ENCODE measurements at regions of chr12 and their contacts with region 1.

Region 1: GRCh38 chr12:44847888-44848702 is 28.0 kb downstream of the NELL2 start:
- DNase-seq: peak; percentile 86
- ATAC-seq: peak; percentile 90
- H3K4me3 Mint-ChIP-seq: peak overlapping the region; percentile 61
- H3K27ac Mint-ChIP-seq: peak overlapping the region; percentile 96
- H3K4me1 Mint-ChIP-seq: peaks cover 88% of the 10 kb centered on the region
- H3K27me3 Mint-ChIP-seq: no peaks in the 10 kb centered on the region

Region 2: GRCh38 chr12:44827832-44828438 is 20.2 kb before region 1 on chr12:
- CTCF ChIA-PET with region 1: interaction called, 5 read pairs
- POLR2A ChIA-PET with region 1: interaction called, 18 read pairs
- DNase-seq: no peak
- ATAC-seq: peak; percentile 61
- H3K4me3 Mint-ChIP-seq: peak overlapping the region; percentile 64
- H3K27ac Mint-ChIP-seq: peak overlapping the region; percentile 87
- H3K4me1 Mint-ChIP-seq: peaks cover 67% of the 10 kb centered on the region
- H3K27me3 Mint-ChIP-seq: no peaks in the 10 kb centered on the region

Region 3: GRCh38 chr12:44835641-44836379 is 12.3 kb before region 1 on chr12:
- CTCF ChIA-PET with region 1: interaction called, 12 read pairs
- POLR2A ChIA-PET with region 1: interaction called, 17 read pairs
- DNase-seq: peak; percentile 48
- ATAC-seq: peak; percentile 66
- H3K4me3 Mint-ChIP-seq: peak overlapping the region; percentile 40
- H3K27ac Mint-ChIP-seq: peak overlapping the region; percentile 86
- H3K4me1 Mint-ChIP-seq: peaks cover 90% of the 10 kb centered on the region
- H3K27me3 Mint-ChIP-seq: no peaks in the 10 kb centered on the region

Region 4: GRCh38 chr12:44942714-44943113 is 94.6 kb after region 1 on chr12:
- CTCF ChIA-PET with region 1: no interaction called
- POLR2A ChIA-PET with region 1: no interaction called
- DNase-seq: no peak
- ATAC-seq: no peak
- H3K4me3 Mint-ChIP-seq: no peak overlapping the region
- H3K27ac Mint-ChIP-seq: no peak overlapping the region
- H3K4me1 Mint-ChIP-seq: no peaks in the 10 kb centered on the region
- H3K27me3 Mint-ChIP-seq: peaks cover 11% of the 10 kb centered on the region

Region 5: DNA sequence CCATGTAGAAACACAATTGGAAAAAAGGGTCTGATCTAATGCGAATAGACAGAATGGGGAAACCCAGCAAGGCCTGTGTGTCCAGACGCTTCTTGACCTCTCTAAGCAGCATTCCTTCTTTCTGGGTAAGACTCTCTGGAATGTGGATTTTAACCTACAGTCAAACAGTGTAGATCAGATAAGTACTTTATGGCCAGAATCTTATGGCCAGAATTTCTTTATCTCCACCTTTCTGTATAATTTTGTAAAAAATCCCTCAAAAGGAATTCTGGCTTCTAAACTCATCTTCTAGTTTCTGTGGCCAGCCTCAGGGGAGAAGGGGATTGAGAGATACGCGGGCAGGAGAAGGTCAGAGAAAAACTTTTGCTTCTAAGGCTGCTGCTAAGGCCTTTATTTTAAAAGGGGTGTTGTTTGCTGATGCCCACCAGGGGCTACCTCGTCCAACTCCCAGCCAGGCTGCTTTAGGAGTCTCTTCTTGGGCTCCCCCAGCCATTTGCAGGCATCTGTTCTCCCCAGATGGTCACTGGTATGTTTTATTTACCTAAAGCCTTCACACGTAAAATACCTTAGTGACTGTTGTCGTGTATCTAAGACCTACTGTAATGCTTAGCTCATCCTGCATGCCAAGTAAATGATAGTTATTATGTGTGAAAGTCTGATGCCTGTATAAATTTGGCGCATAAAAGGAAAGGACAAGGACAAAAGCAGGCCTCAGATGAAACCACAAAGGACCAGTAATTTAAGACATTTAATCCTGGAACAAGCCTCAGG is 436.2 kb after region 1 on chr12:
- CTCF ChIA-PET with region 1: no interaction called
- POLR2A ChIA-PET with region 1: no interaction called
- DNase-seq: no peak
- ATAC-seq: no peak
- H3K4me3 Mint-ChIP-seq: no peak overlapping the region
- H3K27ac Mint-ChIP-seq: no peak overlapping the region
- H3K4me1 Mint-ChIP-seq: no peaks in the 10 kb centered on the region
- H3K27me3 Mint-ChIP-seq: no peaks in the 10 kb centered on the region

Measured in activated CD8-positive, alpha-beta T cell treated with anti-CD3 and anti-CD28 coated beads, Interleukin-2, amount 10 ng/mL, durations not matched to agents 7 days and 5 days (primary cell).